Activated naive CD4-positive, alpha-beta T cell treated with anti-CD3 and anti-CD28 coated beads for 36 hours (primary cell): ENCODE measurements at regions of chr1 and their contacts with region 1.

Region 1: GRCh38 chr1:234730770-234731568 is 121.0 kb upstream of the IRF2BP2 start:
- DNase-seq: peak; percentile 83
- H3K4me3 Mint-ChIP-seq: peak overlapping the region; percentile 25
- H3K27ac Mint-ChIP-seq: peak overlapping the region; percentile 89
- H3K4me1 Mint-ChIP-seq: peaks cover 51% of the 10 kb centered on the region
- H3K27me3 Mint-ChIP-seq: no peaks in the 10 kb centered on the region

Region 2: DNA sequence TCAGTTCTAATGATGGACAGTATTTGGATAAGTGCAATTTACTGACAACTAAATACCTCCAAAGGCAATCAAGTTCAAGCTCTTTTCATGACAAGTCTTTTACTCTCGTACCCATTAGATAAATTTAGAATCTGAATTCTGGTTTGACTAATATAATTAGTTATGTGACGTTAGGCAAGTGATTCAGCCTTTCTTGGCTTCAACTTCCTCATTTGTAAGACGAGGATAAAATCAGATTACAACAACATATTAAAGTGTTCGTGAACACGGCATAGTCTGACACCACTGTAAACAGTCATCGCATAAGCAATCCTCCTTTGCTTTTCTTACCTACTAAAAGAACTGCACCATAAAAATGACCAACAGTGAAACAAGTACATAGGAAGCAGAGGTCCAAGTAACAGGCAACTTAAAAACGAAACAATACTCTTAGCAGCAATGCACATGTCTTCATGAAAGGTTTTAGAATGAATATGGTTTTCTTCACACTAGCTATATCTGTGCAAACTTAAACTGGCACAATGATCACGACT is 332.1 kb before region 1 on chr1:
- CTCF ChIA-PET with region 1: no interaction called
- intact Hi-C with region 1: loop called (anchors 10 kb)
- DNase-seq: peak; percentile 23
- H3K4me3 Mint-ChIP-seq: peak overlapping the region; percentile 60
- H3K27ac Mint-ChIP-seq: peak overlapping the region; percentile 91
- H3K4me1 Mint-ChIP-seq: peaks cover 58% of the 10 kb centered on the region
- H3K27me3 Mint-ChIP-seq: no peaks in the 10 kb centered on the region

Region 3: GRCh38 chr1:234772345-234773147 is 41.6 kb after region 1 on chr1:
- CTCF ChIA-PET with region 1: no interaction called
- intact Hi-C with region 1: loop called (anchors 1 kb)
- DNase-seq: peak; percentile 97
- H3K4me3 Mint-ChIP-seq: peak overlapping the region; percentile 61
- H3K27ac Mint-ChIP-seq: peak overlapping the region; percentile 92
- H3K4me1 Mint-ChIP-seq: peaks cover 59% of the 10 kb centered on the region
- H3K27me3 Mint-ChIP-seq: no peaks in the 10 kb centered on the region

Region 4: DNA sequence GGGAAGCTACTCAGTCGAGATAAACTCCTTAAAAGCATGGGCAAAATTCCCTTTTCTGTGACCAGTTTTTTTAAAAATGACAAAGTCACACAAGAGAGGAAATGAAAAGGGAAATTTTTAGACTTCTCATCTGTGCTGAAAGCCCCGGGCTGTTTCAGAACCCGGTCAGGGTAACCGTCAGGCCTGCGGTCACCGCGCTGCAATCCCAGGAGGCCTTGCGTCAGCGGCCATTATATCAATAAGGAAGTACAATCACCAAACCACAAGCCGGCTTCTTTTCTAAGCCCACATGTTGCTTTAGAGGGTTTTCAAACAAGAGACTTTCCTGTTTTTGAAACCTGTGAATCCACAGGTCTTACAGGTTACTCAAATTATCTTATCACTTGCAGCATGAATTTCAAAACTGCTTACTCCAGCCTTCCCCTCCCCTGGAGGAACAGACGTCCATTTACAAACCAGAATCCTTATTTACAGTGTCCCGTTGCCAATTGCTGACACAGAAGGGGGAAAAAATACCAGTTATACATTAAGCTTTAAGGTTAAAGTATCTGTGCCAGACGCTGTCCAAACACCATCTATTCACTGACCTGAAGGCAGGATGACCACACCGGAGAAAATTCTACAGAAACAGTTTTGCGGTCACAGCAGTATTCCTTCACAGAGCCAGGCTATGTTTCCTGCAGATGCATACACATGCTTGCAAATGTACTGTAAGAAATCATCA is 232.4 kb after region 1 on chr1:
- CTCF ChIA-PET with region 1: no interaction called
- intact Hi-C with region 1: loop called (anchors 1 kb)
- DNase-seq: peak; percentile 98
- H3K4me3 Mint-ChIP-seq: peak overlapping the region; percentile 35
- H3K27ac Mint-ChIP-seq: peak overlapping the region; percentile 97
- H3K4me1 Mint-ChIP-seq: peaks cover 72% of the 10 kb centered on the region
- H3K27me3 Mint-ChIP-seq: no peaks in the 10 kb centered on the region

Region 5: DNA sequence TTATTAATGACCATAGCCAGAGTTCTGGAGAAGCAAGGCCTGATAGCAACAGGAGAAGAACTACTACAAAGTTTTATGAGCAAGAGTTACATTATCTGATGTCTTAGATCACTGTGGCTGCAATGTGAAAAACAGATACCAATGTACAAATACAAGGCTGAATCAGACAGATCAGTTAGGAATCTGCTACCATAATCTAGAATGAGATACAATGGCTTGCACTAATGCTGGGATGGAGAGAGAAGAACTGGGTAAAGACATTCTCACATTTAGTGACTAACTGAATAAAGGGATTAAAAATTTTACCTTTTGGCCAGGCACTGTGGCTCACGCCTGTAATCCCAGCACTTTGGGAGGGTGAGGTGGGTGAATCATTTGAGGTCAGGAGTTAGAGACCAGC is 555.7 kb after region 1 on chr1:
- CTCF ChIA-PET with region 1: no interaction called
- intact Hi-C with region 1: no loop called
- DNase-seq: no peak
- H3K4me3 Mint-ChIP-seq: no peak overlapping the region
- H3K27ac Mint-ChIP-seq: no peak overlapping the region
- H3K4me1 Mint-ChIP-seq: peaks cover 68% of the 10 kb centered on the region
- H3K27me3 Mint-ChIP-seq: no peaks in the 10 kb centered on the region